ENCODE measurements at regions of chr9 and their contacts with region 1.

Region 1: DNA sequence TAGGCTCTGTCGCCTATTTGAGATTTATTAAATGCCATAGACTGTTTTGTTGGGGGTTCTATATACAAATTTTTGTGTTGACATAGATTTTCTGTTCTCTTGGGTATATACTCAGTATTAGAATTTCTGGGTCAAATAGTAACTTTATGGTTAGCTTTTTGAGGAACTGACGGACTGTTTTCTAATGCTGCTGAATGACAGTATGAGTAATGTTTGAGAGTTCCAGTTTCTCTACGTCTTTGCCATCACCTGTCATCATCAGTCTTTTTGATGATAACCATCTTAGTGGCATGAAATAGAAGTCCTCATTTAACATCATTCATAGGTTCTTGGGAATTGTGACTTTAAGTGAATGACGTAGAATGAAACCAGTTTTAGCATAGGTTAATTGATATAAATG is 60.1 kb downstream of the CCDC171 start:
- DNase-seq: no peak
- ATAC-seq: no peak
- H3K4me3 ChIP-seq: no peak overlapping the region
- H3K27ac ChIP-seq: no peak overlapping the region
- H3K4me1 ChIP-seq: no peaks in the 10 kb centered on the region
- H3K27me3 ChIP-seq: no peaks in the 10 kb centered on the region
- CTCF ChIP-seq: no peak
- POLR2A ChIP-seq: no peak

Region 2: DNA sequence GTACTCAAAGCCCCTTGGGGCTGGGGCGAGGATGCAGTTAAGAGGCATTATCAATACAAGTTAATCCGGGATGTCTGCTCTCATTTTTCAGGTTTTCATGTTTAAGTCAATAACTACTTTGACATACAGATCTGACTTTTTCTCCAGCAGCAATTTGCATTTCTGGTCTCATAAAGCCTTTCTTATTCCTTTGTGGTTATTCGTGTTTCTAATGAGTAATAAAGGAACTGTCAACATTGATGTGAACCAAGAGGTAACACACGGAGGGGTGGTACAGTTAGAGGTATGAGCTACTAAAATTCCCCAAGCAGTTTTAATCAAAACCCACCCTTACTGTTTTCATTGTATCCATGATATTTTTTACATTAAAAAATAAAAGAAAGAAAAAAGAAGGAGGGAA is 1161.0 kb before region 1 on chr9:
- in situ Hi-C with region 1: no loop called
- intact Hi-C with region 1: no loop called
- DNase-seq: no peak
- ATAC-seq: no peak
- H3K4me3 ChIP-seq: no peak overlapping the region
- H3K27ac ChIP-seq: no peak overlapping the region
- H3K4me1 ChIP-seq: no peaks in the 10 kb centered on the region
- H3K27me3 ChIP-seq: no peaks in the 10 kb centered on the region
- CTCF ChIP-seq: no peak
- POLR2A ChIP-seq: no peak

Region 3: GRCh38 chr9:15220658-15221318 is 392.2 kb before region 1 on chr9:
- in situ Hi-C with region 1: loop called (anchors 5 to 25 kb)
- intact Hi-C with region 1: no loop called
- DNase-seq: no peak
- ATAC-seq: no peak
- H3K4me3 ChIP-seq: no peak overlapping the region
- H3K27ac ChIP-seq: no peak overlapping the region
- H3K4me1 ChIP-seq: no peaks in the 10 kb centered on the region
- H3K27me3 ChIP-seq: no peaks in the 10 kb centered on the region
- CTCF ChIP-seq: no peak
- POLR2A ChIP-seq: no peak

Region 4: GRCh38 chr9:15735083-15735974 is 122.4 kb after region 1 on chr9:
- in situ Hi-C with region 1: no loop called
- intact Hi-C with region 1: no loop called
- DNase-seq: no peak
- ATAC-seq: peak in 1 of 2 donors; percentile 41
- H3K4me3 ChIP-seq: no peak overlapping the region
- H3K27ac ChIP-seq: no peak overlapping the region
- H3K4me1 ChIP-seq: no peaks in the 10 kb centered on the region
- H3K27me3 ChIP-seq: no peaks in the 10 kb centered on the region
- CTCF ChIP-seq: no peak
- POLR2A ChIP-seq: no peak